B cell (primary cell): ENCODE measurements at regions of chr4 and their contacts with region 1.

Region 1: DNA sequence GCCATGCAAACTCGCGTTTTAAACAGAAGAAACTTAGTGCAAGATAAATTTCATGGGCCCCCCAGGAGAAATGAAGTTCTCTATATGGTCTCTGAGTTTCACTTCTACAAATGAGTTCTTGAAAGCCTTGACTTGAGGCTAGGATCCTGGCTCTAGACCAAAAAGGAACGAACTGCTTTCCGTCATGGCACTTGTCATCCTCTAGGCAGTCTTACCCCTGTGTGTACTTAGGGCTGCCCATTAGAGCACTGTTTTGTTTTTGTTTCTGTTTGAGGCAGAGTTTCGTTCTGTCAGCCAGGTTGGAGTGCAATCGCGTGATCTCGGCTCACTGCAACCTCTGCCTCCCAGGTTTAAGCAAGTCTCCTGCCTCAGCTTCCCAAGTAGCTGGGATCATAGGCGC is 29.0 kb downstream of the RNF4 start:
- DNase-seq: peak; percentile 83
- ATAC-seq: peak; percentile 93
- H3K4me3 ChIP-seq: no peak overlapping the region
- H3K4me3 Mint-ChIP-seq: peak overlapping the region; percentile 53
- H3K27ac ChIP-seq: peak overlapping the region; percentile 56 to 68
- H3K27ac Mint-ChIP-seq: peak overlapping the region; percentile 68
- H3K4me1 ChIP-seq: peaks cover 16 to 30% of the 10 kb centered on the region in 2 donors
- H3K4me1 Mint-ChIP-seq: peaks cover 33% of the 10 kb centered on the region
- H3K27me3 ChIP-seq: no peaks in the 10 kb centered on the region
- H3K27me3 Mint-ChIP-seq: no peaks in the 10 kb centered on the region
- CTCF ChIP-seq: no peak

Region 2: DNA sequence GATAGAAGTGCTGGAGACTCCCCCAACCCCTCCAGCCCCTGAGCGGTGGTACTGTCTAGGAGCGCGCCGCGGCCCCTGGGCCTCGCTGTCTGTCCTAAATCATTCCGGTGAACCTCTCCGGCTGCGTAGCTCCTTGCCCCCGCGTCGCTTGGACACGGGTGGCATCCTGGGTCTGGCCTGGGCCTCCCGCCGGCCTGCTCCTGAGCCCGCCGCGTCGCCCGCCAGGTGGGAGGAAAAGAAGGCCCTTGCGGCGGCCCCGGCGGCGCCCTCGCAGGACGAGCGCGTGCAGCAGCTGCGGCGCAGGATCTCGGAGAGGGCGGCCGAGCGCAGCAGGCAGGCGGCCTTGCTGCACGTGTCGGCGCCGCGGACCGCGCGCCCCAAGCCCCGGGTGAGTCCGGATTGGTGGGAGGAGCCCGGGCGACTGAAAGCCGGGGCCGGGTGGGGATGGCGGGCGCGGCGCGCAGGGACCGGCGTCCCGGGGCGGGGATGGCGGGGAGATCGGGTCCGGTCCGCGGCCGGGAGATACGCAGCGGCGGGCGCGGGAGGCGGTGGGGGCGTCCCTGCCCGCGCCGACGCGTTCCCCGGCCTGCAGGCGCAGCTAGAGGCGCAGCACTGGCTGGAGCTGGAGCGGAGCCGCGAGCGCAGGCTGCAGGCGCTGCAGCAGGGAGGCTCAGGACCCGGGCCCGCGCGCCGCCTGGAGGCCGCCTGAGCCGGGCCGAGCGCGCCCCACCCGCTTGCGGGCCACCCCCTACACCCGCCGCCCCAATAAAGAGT is 35.5 kb before region 1 on chr4:
- CTCF ChIA-PET with region 1: interaction called, 4 read pairs
- POLR2A ChIA-PET with region 1: no interaction called
- intact Hi-C with region 1: loop called (anchors 5 kb)
- DNase-seq: peak; percentile 83
- ATAC-seq: peak; percentile 97
- H3K4me3 ChIP-seq: peak overlapping the region in 3 of 5 experiments; percentile 38 to 47 (median 46)
- H3K4me3 Mint-ChIP-seq: peak overlapping the region; percentile 82
- H3K27ac ChIP-seq: no peak overlapping the region
- H3K27ac Mint-ChIP-seq: no peak overlapping the region
- H3K4me1 ChIP-seq: peaks cover 5 to 10% of the 10 kb centered on the region in 2 donors
- H3K4me1 Mint-ChIP-seq: peaks cover 9% of the 10 kb centered on the region
- H3K27me3 ChIP-seq: peaks cover 0 to 9% (median 4%) of the 10 kb centered on the region in 4 experiments
- H3K27me3 Mint-ChIP-seq: peaks cover 3% of the 10 kb centered on the region
- CTCF ChIP-seq: peak; percentile 71

Region 3: GRCh38 chr4:2484993-2485392 is 12.9 kb before region 1 on chr4:
- CTCF ChIA-PET with region 1: interaction called, 26 read pairs
- POLR2A ChIA-PET with region 1: interaction called, 4 read pairs
- intact Hi-C with region 1: loop called (anchors 1 kb)
- DNase-seq: peak; percentile 90
- ATAC-seq: peak; percentile 93
- H3K4me3 ChIP-seq: peak overlapping the region; percentile 17 to 54 (median 28)
- H3K4me3 Mint-ChIP-seq: peak overlapping the region; percentile 72
- H3K27ac ChIP-seq: peak overlapping the region; percentile 76 to 89
- H3K27ac Mint-ChIP-seq: peak overlapping the region; percentile 85
- H3K4me1 ChIP-seq: peaks cover 78 to 88% of the 10 kb centered on the region in 2 donors
- H3K4me1 Mint-ChIP-seq: peaks cover 85% of the 10 kb centered on the region
- H3K27me3 ChIP-seq: no peaks in the 10 kb centered on the region
- H3K27me3 Mint-ChIP-seq: no peaks in the 10 kb centered on the region
- CTCF ChIP-seq: no peak

Region 4: GRCh38 chr4:2732991-2733868 is 235.3 kb after region 1 on chr4:
- CTCF ChIA-PET with region 1: no interaction called
- POLR2A ChIA-PET with region 1: no interaction called
- intact Hi-C with region 1: no loop called
- DNase-seq: no peak
- ATAC-seq: no peak
- H3K4me3 ChIP-seq: no peak overlapping the region
- H3K4me3 Mint-ChIP-seq: no peak overlapping the region
- H3K27ac ChIP-seq: no peak overlapping the region
- H3K27ac Mint-ChIP-seq: peak overlapping the region; percentile 26
- H3K4me1 ChIP-seq: peaks cover 5 to 6% of the 10 kb centered on the region in 2 donors
- H3K4me1 Mint-ChIP-seq: peaks cover 8% of the 10 kb centered on the region
- H3K27me3 ChIP-seq: no peaks in the 10 kb centered on the region
- H3K27me3 Mint-ChIP-seq: no peaks in the 10 kb centered on the region
- CTCF ChIP-seq: no peak